Mammary epithelial cell (primary cell): ENCODE measurements at regions of chr10 and their contacts with region 1.

Region 1: GRCh38 chr10:15363031-15363430 is 8.1 kb downstream of the FAM171A1 start:
- DNase-seq: no peak
- H3K4me3 ChIP-seq: no peak overlapping the region
- H3K27ac ChIP-seq: no peak overlapping the region
- H3K4me1 ChIP-seq: no peaks in the 10 kb centered on the region
- H3K27me3 ChIP-seq: no peaks in the 10 kb centered on the region
- CTCF ChIP-seq: no peak

Region 2: GRCh38 chr10:15280462-15280861 is 82.6 kb before region 1 on chr10:
- CTCF ChIA-PET with region 1: no interaction called
- dilution Hi-C with region 1: loop called (anchors 5 kb)
- in situ Hi-C with region 1: no loop called
- intact Hi-C with region 1: no loop called
- DNase-seq: no peak
- H3K4me3 ChIP-seq: no peak overlapping the region
- H3K27ac ChIP-seq: no peak overlapping the region
- H3K4me1 ChIP-seq: no peaks in the 10 kb centered on the region
- H3K27me3 ChIP-seq: no peaks in the 10 kb centered on the region
- CTCF ChIP-seq: no peak